K562 (cell line): ENCODE measurements at regions of chr19 and their contacts with region 1.

Region 1: GRCh38 chr19:48637170-48637947 is at the start of gene DBP:
- DNase-seq: peak; percentile 81 to 99 (median 90)
- ATAC-seq: peak; percentile 78
- H3K4me3 ChIP-seq: peak within 1 kb of the TSS; percentile 51
- H3K27ac ChIP-seq: peak within 1 kb of the TSS; percentile 91
- H3K4me1 ChIP-seq: peaks cover 48 to 74% of the 10 kb centered on the region in 2 experiments
- H3K27me3 ChIP-seq: no peaks in the 10 kb centered on the region
- CTCF ChIP-seq: no peak; a peak in 1 of 6 replicates
- EP300 ChIP-seq: no peak
- POLR2A ChIP-seq: no peak
- RAD21 ChIP-seq: no peak
- polyA plus RNA-seq, gene DBP: 0.25 to 0.64 TPM

Region 2: GRCh38 chr19:48468775-48469288 is 168.5 kb before region 1 on chr19:
- CTCF ChIA-PET with region 1: no interaction called
- POLR2A ChIA-PET with region 1: no interaction called
- in situ Hi-C with region 1: no loop called
- intact Hi-C with region 1: no loop called
- DNase-seq: peak; percentile 95 to 100 (median 97)
- ATAC-seq: peak; percentile 97
- H3K4me3 ChIP-seq: peak overlapping the region; percentile 91
- H3K27ac ChIP-seq: peak overlapping the region; percentile 98
- H3K4me1 ChIP-seq: peaks cover 7 to 24% of the 10 kb centered on the region in 2 experiments; a peak in 4 of 5 replicates
- H3K27me3 ChIP-seq: no peaks in the 10 kb centered on the region
- CTCF ChIP-seq: no peak; a peak in 1 of 6 replicates
- EP300 ChIP-seq: no peak
- POLR2A ChIP-seq: no peak
- RAD21 ChIP-seq: no peak

Region 3: GRCh38 chr19:48624067-48624594 is 13.2 kb before region 1 on chr19:
- CTCF ChIA-PET with region 1: no interaction called
- POLR2A ChIA-PET with region 1: interaction called, 18 read pairs
- in situ Hi-C with region 1: no loop called
- intact Hi-C with region 1: loop called (anchors 1 kb)
- DNase-seq: peak; percentile 94 to 99 (median 96)
- ATAC-seq: peak; percentile 93
- H3K4me3 ChIP-seq: peak overlapping the region; percentile 49
- H3K27ac ChIP-seq: peak overlapping the region; percentile 72
- H3K4me1 ChIP-seq: peaks cover 25 to 62% of the 10 kb centered on the region in 2 experiments
- H3K27me3 ChIP-seq: no peaks in the 10 kb centered on the region
- CTCF ChIP-seq: no peak
- EP300 ChIP-seq: no peak
- POLR2A ChIP-seq: 0 out of 2 replicates have a peak, but pooled peaks have one; percentile 53
- RAD21 ChIP-seq: no peak

Region 4: GRCh38 chr19:48713864-48714758 is 76.8 kb after region 1 on chr19:
- CTCF ChIA-PET with region 1: no interaction called
- POLR2A ChIA-PET with region 1: no interaction called
- in situ Hi-C with region 1: no loop called
- intact Hi-C with region 1: no loop called
- DNase-seq: peak; percentile 98 to 99 (median 98)
- ATAC-seq: peak; percentile 97
- H3K4me3 ChIP-seq: peak overlapping the region; percentile 73
- H3K27ac ChIP-seq: peak overlapping the region; percentile 70
- H3K4me1 ChIP-seq: peaks cover 18 to 45% of the 10 kb centered on the region in 2 experiments
- H3K27me3 ChIP-seq: no peaks in the 10 kb centered on the region
- CTCF ChIP-seq: peak in 2 of 3 experiments; percentile 31 to 36; a peak in 3 of 6 replicates
- EP300 ChIP-seq: no peak
- POLR2A ChIP-seq: peak; percentile 39; the same call in 1 of the 2 replicates
- RAD21 ChIP-seq: no peak

Region 5: DNA sequence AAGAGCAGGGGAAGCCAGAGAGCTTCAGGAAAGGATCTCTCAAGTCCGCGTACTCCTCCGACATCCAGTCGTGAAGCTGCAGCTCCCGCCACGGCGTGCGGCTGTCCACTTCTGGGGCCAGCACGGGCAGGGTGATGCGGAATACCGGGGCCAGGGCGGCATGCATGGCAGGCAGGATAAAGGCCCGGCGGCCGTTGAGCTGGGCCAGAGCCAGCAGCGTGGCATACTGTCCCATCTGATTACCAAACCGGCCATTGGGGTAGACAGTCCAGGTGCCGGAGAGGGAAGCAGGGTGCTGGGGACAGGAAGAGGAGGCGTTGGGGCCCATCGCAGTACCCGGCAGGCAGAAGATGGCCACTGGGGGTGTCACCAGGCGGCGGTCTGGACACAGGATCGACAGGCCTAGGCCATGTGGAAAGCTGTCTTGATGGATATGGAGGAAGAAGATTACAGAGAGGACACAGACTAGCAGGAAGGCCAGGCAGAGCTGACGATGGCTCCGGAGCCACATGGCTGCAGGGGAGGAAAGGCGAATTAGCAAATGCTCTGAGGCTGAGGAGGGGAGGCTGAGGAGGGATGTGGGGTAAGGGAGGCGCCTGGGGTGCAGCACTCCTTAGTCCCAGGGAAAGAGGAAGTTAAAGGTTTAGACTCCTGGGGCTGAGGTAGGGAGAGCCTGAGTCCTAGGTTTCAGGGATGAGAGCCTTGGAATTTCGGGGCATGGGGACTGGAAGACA is 113.6 kb after region 1 on chr19:
- CTCF ChIA-PET with region 1: no interaction called
- POLR2A ChIA-PET with region 1: no interaction called
- in situ Hi-C with region 1: no loop called
- intact Hi-C with region 1: no loop called
- DNase-seq: no peak
- ATAC-seq: no peak
- H3K4me3 ChIP-seq: no peak overlapping the region
- H3K27ac ChIP-seq: no peak overlapping the region; the same call in 2 of the 3 replicates
- H3K4me1 ChIP-seq: peaks cover 48 to 75% of the 10 kb centered on the region in 2 experiments
- H3K27me3 ChIP-seq: no peaks in the 10 kb centered on the region
- CTCF ChIP-seq: no peak
- EP300 ChIP-seq: no peak
- POLR2A ChIP-seq: no peak
- RAD21 ChIP-seq: no peak

Region 6: DNA sequence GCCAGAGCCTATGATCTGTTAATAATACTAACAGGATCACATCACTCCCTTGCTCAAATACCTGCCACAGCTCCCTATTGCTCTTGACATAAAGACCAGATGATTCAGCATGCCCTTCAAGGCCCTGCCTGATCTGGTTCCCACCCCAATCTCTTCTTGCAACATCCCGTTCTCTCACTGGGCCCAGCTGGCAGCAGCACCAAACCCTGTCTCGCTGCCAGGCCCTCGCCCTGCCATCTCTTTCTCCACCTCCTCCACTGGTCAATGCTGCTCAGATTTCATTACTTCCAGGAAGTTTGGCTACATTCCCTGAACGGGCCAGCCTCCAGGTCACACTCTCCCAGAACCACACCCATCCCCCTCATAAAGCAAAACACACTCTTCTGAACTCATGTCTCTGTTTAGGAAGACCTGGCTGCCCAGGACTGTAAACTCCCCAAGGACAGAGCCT is 182.0 kb after region 1 on chr19:
- CTCF ChIA-PET with region 1: no interaction called
- POLR2A ChIA-PET with region 1: no interaction called
- in situ Hi-C with region 1: no loop called
- intact Hi-C with region 1: no loop called
- DNase-seq: peak in 2 of 4 experiments; percentile 11 to 47
- ATAC-seq: peak; percentile 51
- H3K4me3 ChIP-seq: no peak overlapping the region
- H3K27ac ChIP-seq: no peak overlapping the region
- H3K4me1 ChIP-seq: peaks cover 3 to 14% of the 10 kb centered on the region in 2 experiments; a peak in 3 of 5 replicates
- H3K27me3 ChIP-seq: no peaks in the 10 kb centered on the region
- CTCF ChIP-seq: no peak
- EP300 ChIP-seq: no peak
- POLR2A ChIP-seq: no peak
- RAD21 ChIP-seq: no peak